ENCODE measurements at regions of chr15 and their contacts with region 1.

Region 1: DNA sequence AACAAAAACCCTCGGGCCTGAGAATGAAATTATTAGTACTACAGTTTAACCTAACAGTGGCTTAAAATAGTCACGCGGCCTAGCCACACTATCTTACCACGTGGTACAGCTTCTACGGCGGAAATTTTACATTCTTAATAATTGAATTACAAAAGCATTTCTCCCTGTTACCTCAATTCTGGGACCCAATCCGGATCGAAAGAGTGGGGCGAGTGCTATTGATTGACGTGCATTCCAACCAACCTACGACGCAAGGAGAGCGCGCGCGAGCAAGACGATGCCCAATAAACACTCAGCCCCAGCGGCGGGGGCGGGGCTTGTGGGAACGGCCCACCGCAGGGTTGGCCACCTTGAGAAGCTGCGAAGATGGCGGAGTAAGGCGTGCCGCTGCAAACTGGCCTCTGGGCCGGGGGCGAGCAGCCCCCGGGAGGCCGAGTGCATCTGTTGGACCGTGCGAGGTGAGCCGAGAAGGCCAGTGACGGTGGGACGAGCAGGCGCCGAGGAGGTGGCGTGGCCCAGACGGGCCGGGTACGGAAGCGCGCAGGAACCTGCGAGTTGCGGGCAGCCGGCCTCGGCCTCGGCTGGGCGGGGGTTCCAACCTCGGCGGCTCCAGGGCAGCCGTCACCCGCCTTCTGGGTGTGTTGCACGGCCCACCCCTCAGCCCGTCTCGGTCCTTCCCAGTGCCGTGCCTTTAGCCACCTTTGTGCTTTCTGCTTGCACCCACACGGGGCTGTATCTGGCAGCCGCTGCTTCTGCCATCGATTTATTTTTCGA is 48.6 kb downstream of the OIP5 start:
- DNase-seq: peak; percentile 94 to 98 (median 97)
- ATAC-seq: peak; percentile 98
- H3K4me3 ChIP-seq: peak overlapping the region; percentile 89
- H3K4me3 Mint-ChIP-seq: peak overlapping the region; percentile 90 to 100 (median 92)
- H3K27ac ChIP-seq: peak overlapping the region; percentile 91
- H3K27ac Mint-ChIP-seq: peak overlapping the region; percentile 96 to 99 (median 97)
- H3K4me1 ChIP-seq: peaks cover 21 to 31% of the 10 kb centered on the region in 2 donors
- H3K4me1 Mint-ChIP-seq: peaks cover 22 to 54% (median 51%) of the 10 kb centered on the region in 7 donors
- H3K27me3 ChIP-seq: no peaks in the 10 kb centered on the region
- H3K27me3 Mint-ChIP-seq: peaks cover 0 to 2% (median 0%) of the 10 kb centered on the region in 5 donors

Region 2: GRCh38 chr15:40893733-40894688 is 389.8 kb before region 1 on chr15 and contains the start of gene VPS18:
- CTCF ChIA-PET with region 1: no interaction called
- POLR2A ChIA-PET with region 1: interaction called, 3 read pairs
- intact Hi-C with region 1: loop called in 1 of 2 experiments (anchors 1 kb)
- DNase-seq: peak; percentile 96 to 99 (median 98)
- ATAC-seq: peak; percentile 99
- H3K4me3 ChIP-seq: peak within 1 kb of the TSS; percentile 94
- H3K4me3 Mint-ChIP-seq: peak within 1 kb of the TSS; percentile 96 to 99 (median 98)
- H3K27ac ChIP-seq: peak within 1 kb of the TSS; percentile 83
- H3K27ac Mint-ChIP-seq: peak within 1 kb of the TSS; percentile 87 to 98 (median 96)
- H3K4me1 ChIP-seq: peaks cover 17 to 18% of the 10 kb centered on the region in 2 donors
- H3K4me1 Mint-ChIP-seq: peaks cover 30 to 47% (median 37%) of the 10 kb centered on the region in 7 donors
- H3K27me3 ChIP-seq: no peaks in the 10 kb centered on the region
- H3K27me3 Mint-ChIP-seq: peaks cover 0 to 7% (median 0%) of the 10 kb centered on the region in 5 donors
- total RNA-seq, gene VPS18: 19.9 to 22.3 (median 20.5) TPM

Region 3: GRCh38 chr15:41331833-41332787 is 48.3 kb after region 1 on chr15 and contains the start of gene OIP5:
- CTCF ChIA-PET with region 1: no interaction called
- POLR2A ChIA-PET with region 1: interaction called, 5 read pairs
- intact Hi-C with region 1: loop called (anchors 1 kb)
- DNase-seq: peak; percentile 83 to 99 (median 97)
- ATAC-seq: peak; percentile 98
- H3K4me3 ChIP-seq: peak within 1 kb of the TSS; percentile 95
- H3K4me3 Mint-ChIP-seq: peak within 1 kb of the TSS; percentile 87 to 100 (median 97)
- H3K27ac ChIP-seq: peak within 1 kb of the TSS; percentile 52
- H3K27ac Mint-ChIP-seq: peak within 1 kb of the TSS; percentile 77 to 97 (median 91)
- H3K4me1 ChIP-seq: peaks cover 9 to 13% of the 10 kb centered on the region in 2 donors
- H3K4me1 Mint-ChIP-seq: peaks cover 12 to 32% (median 29%) of the 10 kb centered on the region in 7 donors
- H3K27me3 ChIP-seq: no peaks in the 10 kb centered on the region
- H3K27me3 Mint-ChIP-seq: no peaks in the 10 kb centered on the region
- total RNA-seq, gene OIP5: 0.32 to 15.2 (median 0.54) TPM in 4 of 5 experiments, not detected in the other

Region 4: GRCh38 chr15:41416742-41417406 is 133.0 kb after region 1 on chr15 and contains the start of gene RTF1:
- CTCF ChIA-PET with region 1: no interaction called
- POLR2A ChIA-PET with region 1: no interaction called
- intact Hi-C with region 1: loop called in 1 of 2 experiments (anchors 1 kb)
- DNase-seq: peak; percentile 92 to 100 (median 96)
- ATAC-seq: peak; percentile 99
- H3K4me3 ChIP-seq: peak within 1 kb of the TSS; percentile 98
- H3K4me3 Mint-ChIP-seq: peak within 1 kb of the TSS; percentile 86 to 96 (median 95)
- H3K27ac ChIP-seq: peak within 1 kb of the TSS; percentile 81
- H3K27ac Mint-ChIP-seq: peak within 1 kb of the TSS; percentile 74 to 98 (median 93)
- H3K4me1 ChIP-seq: peaks cover 6 to 16% of the 10 kb centered on the region in 2 donors
- H3K4me1 Mint-ChIP-seq: peaks cover 34 to 53% (median 43%) of the 10 kb centered on the region in 7 donors
- H3K27me3 ChIP-seq: no peaks in the 10 kb centered on the region
- H3K27me3 Mint-ChIP-seq: no peaks in the 10 kb centered on the region
- total RNA-seq, gene RTF1: 34.0 to 41.3 (median 37.2) TPM

Region 5: DNA sequence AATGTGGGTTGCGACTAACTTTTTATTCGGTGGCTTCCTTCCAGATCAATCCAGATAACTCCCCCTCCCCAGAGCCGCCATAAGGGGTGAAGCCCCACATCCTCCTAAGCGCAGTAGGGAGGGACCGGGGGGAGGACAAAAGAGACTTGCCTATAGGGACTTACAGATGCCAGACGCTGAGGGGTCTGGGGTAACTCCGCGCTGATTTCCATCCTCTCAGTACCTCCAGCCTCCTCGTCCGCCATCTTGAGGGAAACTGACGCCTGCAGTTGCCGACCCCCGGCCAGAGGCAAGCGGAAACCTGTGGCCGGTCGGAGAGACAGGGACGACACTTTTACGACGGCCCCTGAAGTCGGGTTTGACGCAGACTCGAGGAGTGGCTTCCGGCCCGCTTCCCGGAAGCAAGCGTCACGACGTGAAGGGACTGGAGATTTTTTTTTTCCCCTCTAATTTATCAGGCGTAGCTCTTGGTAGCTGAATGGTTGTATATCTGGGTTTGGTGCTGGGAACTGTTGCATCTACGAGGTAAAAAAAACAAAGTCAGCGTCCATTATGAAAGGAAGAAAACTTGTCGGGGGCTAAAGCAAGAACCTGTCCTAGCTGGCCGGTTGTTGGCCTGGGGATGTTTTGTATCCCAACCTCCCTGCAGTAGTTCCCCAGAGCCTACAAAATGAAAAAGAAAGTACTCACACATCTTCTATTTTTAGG is 1822.1 kb after region 1 on chr15 and contains the start of gene UBR1:
- CTCF ChIA-PET with region 1: no interaction called
- POLR2A ChIA-PET with region 1: no interaction called
- intact Hi-C with region 1: loop called in 1 of 2 experiments (anchors 2 kb)
- DNase-seq: peak; percentile 65 to 91 (median 89)
- ATAC-seq: peak; percentile 94
- H3K4me3 ChIP-seq: peak within 1 kb of the TSS; percentile 86
- H3K4me3 Mint-ChIP-seq: peak within 1 kb of the TSS; percentile 86 to 99 (median 95)
- H3K27ac ChIP-seq: peak within 1 kb of the TSS; percentile 99
- H3K27ac Mint-ChIP-seq: peak within 1 kb of the TSS; percentile 97 to 99 (median 98)
- H3K4me1 ChIP-seq: peaks cover 21 to 24% of the 10 kb centered on the region in 2 donors
- H3K4me1 Mint-ChIP-seq: peaks cover 40 to 56% (median 52%) of the 10 kb centered on the region in 7 donors
- H3K27me3 ChIP-seq: no peaks in the 10 kb centered on the region
- H3K27me3 Mint-ChIP-seq: peaks cover 0 to 5% (median 0%) of the 10 kb centered on the region in 5 donors
- total RNA-seq, gene UBR1: 38.4 to 51.7 (median 48.0) TPM